Transverse colon (tissue), 4 donors: ENCODE measurements at regions of chr17 and their contacts with region 1.

Region 1: DNA sequence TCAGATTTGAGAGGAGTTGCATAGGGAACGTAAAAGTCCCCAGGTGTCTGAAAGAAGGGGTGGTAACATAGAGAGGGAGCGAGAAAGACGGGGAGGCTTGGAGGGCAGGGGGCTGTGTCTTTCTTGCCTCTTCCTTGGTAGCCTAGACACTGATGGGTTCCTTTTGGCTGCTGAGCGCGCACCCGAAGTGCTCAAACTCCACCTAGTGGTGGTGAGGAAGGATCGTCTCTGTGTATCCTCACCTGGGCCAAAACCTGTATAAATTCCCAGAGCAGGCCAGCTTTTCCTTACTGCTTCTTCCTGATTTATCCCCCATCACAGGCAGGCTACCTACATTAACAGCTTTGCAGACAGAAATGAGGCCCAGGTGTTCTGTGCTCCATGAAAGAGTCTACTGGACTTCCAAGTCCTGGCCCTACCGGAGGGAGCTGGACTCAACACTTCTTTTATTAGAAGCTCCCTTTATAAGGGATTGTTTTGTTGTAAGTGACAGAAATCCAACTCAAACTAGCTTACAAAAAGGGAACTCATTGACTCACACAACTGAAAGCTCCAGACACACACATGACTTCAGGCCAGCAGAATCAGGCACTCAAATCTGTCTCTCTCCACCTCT is 5.5 kb upstream of the SLC25A35 start:
- DNase-seq: peak; percentile 60
- H3K4me3 ChIP-seq: no peak overlapping the region
- H3K27ac ChIP-seq: no peak overlapping the region
- H3K4me1 ChIP-seq: peaks cover 0 to 10% (median 0%) of the 10 kb centered on the region in 4 donors
- H3K27me3 ChIP-seq: no peaks in the 10 kb centered on the region
- CTCF ChIP-seq: peak; percentile 70 to 94 (median 84)
- EP300 ChIP-seq: no peak
- POLR2A ChIP-seq: no peak

Region 2: DNA sequence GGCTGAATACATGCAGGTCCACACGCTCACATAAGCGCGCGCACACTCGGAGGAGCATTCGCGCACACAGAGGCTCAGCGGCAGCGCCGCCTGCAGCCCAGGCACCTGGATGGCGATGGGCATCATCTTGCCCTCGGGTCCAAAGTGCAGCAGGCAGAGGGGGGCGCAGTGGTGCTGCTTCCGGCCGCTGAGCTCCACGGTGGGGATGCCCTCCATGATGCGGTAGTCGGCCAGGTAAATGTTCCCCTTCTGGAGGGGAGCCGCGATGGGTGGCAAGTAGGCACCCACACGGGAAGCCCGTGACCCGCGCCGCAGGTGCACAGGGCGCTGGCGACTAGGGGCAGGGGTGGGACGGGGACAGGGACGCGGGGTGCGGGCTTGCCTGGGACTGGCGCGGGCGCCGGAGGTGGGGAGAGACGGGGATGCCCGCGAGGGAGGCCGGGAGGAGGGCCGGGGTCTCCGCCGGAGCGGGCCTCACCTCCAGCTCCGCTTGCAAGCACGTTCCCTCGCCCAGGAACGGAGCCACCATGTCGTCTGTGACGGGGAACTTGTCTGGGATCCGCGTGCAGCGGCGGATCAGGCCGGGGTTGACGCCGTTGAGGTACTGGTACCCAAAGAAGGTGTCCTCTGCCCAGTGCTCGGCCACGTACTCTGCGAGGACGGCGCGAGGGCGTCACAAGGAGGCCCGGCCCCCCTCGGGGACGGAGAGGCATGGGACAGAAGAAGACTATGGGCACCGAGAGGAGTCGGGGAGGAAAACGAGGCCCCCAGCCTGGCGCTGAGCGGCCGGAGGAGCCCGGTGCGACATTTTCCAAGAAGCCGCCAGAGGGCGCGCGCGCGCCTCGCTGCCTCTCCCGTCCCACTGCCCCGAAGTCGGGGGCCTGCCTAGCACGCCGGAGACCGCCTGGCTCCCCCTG is 221.2 kb before region 1 on chr17:
- in situ Hi-C with region 1: loop called in 2 of 4 experiments (anchors 25 kb)
- intact Hi-C with region 1: no loop called
- DNase-seq: peak; percentile 76
- H3K4me3 ChIP-seq: peak overlapping the region; percentile 6 to 50 (median 27)
- H3K27ac ChIP-seq: peak overlapping the region in 3 of 4 donors; percentile 34 to 70 (median 40)
- H3K4me1 ChIP-seq: peaks cover 0 to 18% (median 16%) of the 10 kb centered on the region in 4 donors
- H3K27me3 ChIP-seq: peaks cover 76% of the 10 kb centered on the region
- CTCF ChIP-seq: peak; percentile 79 to 96 (median 94)
- EP300 ChIP-seq: no peak
- POLR2A ChIP-seq: no peak

Region 3: GRCh38 chr17:8222630-8223356 is 77.9 kb before region 1 on chr17:
- in situ Hi-C with region 1: no loop called
- intact Hi-C with region 1: loop called (anchors 2 kb)
- DNase-seq: peak; percentile 94
- H3K4me3 ChIP-seq: peak overlapping the region; percentile 46 to 82 (median 52)
- H3K27ac ChIP-seq: peak overlapping the region; percentile 95 to 99 (median 98)
- H3K4me1 ChIP-seq: peaks cover 8 to 40% (median 20%) of the 10 kb centered on the region in 4 donors
- H3K27me3 ChIP-seq: no peaks in the 10 kb centered on the region
- CTCF ChIP-seq: no peak
- EP300 ChIP-seq: no peak
- POLR2A ChIP-seq: peak; percentile 79

Region 4: DNA sequence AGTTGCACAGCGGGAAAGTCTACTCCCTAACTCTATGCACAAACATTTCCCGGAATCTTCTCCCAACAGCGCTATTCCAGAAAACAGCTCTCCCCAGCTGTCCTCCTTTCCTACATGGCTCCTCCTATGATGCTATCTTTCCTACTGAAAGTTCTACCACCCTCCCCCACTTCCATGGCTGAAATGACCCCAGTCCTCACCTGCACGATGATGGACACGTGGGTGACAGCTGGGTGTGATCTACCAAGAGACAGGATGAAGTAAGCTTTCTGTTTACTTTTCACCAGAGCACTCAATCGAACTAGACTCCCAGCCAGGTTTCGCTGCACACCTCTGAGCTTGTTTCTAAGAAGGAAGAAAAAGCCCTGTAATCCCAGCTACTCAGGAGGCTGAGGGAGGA is 63.6 kb before region 1 on chr17:
- in situ Hi-C with region 1: loop called in 1 of 4 experiments (anchors 10 kb)
- intact Hi-C with region 1: no loop called
- DNase-seq: no peak
- H3K4me3 ChIP-seq: no peak overlapping the region
- H3K27ac ChIP-seq: no peak overlapping the region
- H3K4me1 ChIP-seq: no peaks in the 10 kb centered on the region
- H3K27me3 ChIP-seq: no peaks in the 10 kb centered on the region
- CTCF ChIP-seq: no peak
- EP300 ChIP-seq: no peak
- POLR2A ChIP-seq: no peak